SK-N-SH (cell line): ENCODE measurements at regions of chr5 and their contacts with region 1.

Region 1: DNA sequence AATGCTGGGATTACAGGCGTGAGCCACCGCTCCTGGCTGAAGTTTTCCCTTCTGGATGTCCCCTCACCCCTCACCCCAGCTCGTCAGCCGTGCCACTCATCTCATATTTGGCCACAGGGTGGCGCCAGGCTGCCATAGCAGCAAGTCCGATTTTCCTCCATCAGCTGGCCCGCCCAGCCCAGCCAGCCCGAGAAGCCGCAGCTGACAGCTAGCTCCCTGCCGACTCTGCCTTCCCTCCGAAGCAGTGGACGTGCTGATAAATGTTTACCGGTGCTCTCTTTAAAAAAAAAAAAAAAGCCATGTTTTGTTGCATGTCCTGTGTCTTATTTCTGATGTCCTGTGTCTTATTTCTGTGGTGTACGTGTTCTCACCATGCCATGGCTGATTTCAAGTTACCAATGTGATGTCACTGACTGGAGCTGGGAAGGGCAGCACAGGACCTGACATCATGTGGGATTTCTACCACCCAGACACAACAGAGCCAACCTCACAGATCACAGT is 58.3 kb downstream of the PFDN1 start:
- DNase-seq: peak; percentile 83
- H3K4me3 ChIP-seq: peak overlapping the region in 1 of 2 experiments; percentile 29; a peak in 1 of 4 replicates
- H3K27ac ChIP-seq: peak overlapping the region in 1 of 2 experiments; percentile 94; a peak in 2 of 4 replicates
- H3K4me1 ChIP-seq: peaks cover 44 to 53% of the 10 kb centered on the region in 2 experiments
- H3K27me3 ChIP-seq: no peaks in the 10 kb centered on the region
- CTCF ChIP-seq: peak; percentile 88
- EP300 ChIP-seq: no peak
- RAD21 ChIP-seq: peak; percentile 91

Region 2: DNA sequence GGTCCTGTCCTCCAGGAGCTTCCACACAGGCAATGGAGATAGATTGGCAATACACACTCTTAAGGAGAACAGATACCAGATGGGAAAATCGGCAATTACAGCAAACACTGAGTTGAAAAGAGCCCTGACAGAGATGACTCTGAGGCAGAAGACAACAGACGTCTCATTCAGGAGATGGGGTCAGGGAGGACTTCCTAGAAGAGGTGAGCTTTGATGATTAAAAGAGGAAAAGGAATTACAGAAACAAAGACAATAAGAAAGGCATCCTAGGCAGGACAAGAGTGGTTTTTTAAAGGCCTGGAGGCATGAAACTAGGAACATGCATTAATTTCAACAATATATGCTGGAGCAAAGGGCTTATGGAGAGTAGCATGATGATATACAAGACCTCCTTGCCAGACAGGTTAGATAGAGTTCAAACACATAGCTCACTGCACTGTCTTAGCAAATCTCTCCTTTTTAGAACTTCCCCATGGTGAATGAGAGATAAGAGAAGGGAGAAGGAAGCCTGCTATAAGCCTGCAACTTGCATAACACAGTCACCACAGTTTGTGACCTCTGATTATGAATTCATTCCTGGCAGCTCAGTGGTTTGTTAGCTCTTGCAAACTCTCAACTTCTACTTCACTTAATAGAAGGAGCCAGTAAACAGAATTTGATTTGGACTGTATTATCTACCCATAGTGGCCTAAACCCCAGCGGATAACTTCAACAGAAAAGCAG is 1094.9 kb before region 1 on chr5:
- CTCF ChIA-PET with region 1: no interaction called
- POLR2A ChIA-PET with region 1: no interaction called
- DNase-seq: no peak
- H3K4me3 ChIP-seq: no peak overlapping the region
- H3K27ac ChIP-seq: no peak overlapping the region
- H3K4me1 ChIP-seq: peaks cover 9 to 35% of the 10 kb centered on the region in 2 experiments; a peak in 3 of 4 replicates
- H3K27me3 ChIP-seq: no peaks in the 10 kb centered on the region
- CTCF ChIP-seq: no peak
- EP300 ChIP-seq: no peak
- RAD21 ChIP-seq: no peak

Region 3: GRCh38 chr5:140094889-140095288 is 149.7 kb before region 1 on chr5:
- CTCF ChIA-PET with region 1: no interaction called
- POLR2A ChIA-PET with region 1: no interaction called
- DNase-seq: no peak
- H3K4me3 ChIP-seq: no peak overlapping the region
- H3K27ac ChIP-seq: no peak overlapping the region
- H3K4me1 ChIP-seq: no peaks in the 10 kb centered on the region
- H3K27me3 ChIP-seq: no peaks in the 10 kb centered on the region; the same call in 1 of the 2 replicates
- CTCF ChIP-seq: no peak
- EP300 ChIP-seq: no peak
- RAD21 ChIP-seq: no peak

Region 4: DNA sequence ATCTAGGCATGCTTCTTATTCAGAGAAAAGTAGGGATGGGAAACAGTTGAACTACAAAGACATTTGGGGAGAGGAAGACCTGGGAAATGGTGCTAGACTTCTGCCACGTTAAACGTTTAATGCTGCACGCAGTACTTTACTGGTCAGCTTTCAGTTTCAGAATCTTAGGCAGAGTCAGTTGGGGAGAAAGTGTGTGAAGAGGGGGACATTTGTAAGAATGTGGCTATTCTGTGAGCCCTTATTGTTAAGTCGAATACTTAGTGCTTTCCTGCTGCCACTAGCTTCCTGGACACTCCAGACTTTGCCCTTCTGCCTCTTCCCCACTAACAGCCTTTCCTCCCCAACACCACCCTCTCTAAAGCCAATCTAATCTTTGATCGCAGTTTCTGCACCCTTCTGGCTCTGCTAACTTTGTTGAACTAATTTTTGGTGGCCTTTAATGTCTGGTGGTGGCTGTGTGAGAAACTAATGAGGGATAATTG is 63.5 kb before region 1 on chr5:
- CTCF ChIA-PET with region 1: interaction called, 11 read pairs
- POLR2A ChIA-PET with region 1: no interaction called
- DNase-seq: peak; percentile 39
- H3K4me3 ChIP-seq: no peak overlapping the region
- H3K27ac ChIP-seq: peak overlapping the region in 1 of 2 experiments; percentile 87; a peak in 2 of 4 replicates
- H3K4me1 ChIP-seq: peaks cover 11 to 36% of the 10 kb centered on the region in 2 experiments; a peak in 3 of 4 replicates
- H3K27me3 ChIP-seq: no peaks in the 10 kb centered on the region
- CTCF ChIP-seq: no peak
- EP300 ChIP-seq: peak in 1 of 2 experiments; percentile 92; a peak in 2 of 4 replicates
- RAD21 ChIP-seq: no peak

Region 5: GRCh38 chr5:140230373-140230772 is 14.2 kb before region 1 on chr5:
- CTCF ChIA-PET with region 1: interaction called, 14 read pairs
- POLR2A ChIA-PET with region 1: no interaction called
- DNase-seq: no peak
- H3K4me3 ChIP-seq: no peak overlapping the region
- H3K27ac ChIP-seq: no peak overlapping the region
- H3K4me1 ChIP-seq: peaks cover 0 to 3% of the 10 kb centered on the region in 2 experiments; a peak in 1 of 4 replicates
- H3K27me3 ChIP-seq: no peaks in the 10 kb centered on the region
- CTCF ChIP-seq: no peak
- EP300 ChIP-seq: no peak
- RAD21 ChIP-seq: no peak

Region 6: GRCh38 chr5:140284013-140284412 is 39.4 kb after region 1 on chr5:
- CTCF ChIA-PET with region 1: interaction called, 12 read pairs
- POLR2A ChIA-PET with region 1: no interaction called
- DNase-seq: no peak
- H3K4me3 ChIP-seq: no peak overlapping the region
- H3K27ac ChIP-seq: no peak overlapping the region
- H3K4me1 ChIP-seq: no peaks in the 10 kb centered on the region
- H3K27me3 ChIP-seq: no peaks in the 10 kb centered on the region
- CTCF ChIP-seq: no peak
- EP300 ChIP-seq: no peak
- RAD21 ChIP-seq: no peak

Region 7: DNA sequence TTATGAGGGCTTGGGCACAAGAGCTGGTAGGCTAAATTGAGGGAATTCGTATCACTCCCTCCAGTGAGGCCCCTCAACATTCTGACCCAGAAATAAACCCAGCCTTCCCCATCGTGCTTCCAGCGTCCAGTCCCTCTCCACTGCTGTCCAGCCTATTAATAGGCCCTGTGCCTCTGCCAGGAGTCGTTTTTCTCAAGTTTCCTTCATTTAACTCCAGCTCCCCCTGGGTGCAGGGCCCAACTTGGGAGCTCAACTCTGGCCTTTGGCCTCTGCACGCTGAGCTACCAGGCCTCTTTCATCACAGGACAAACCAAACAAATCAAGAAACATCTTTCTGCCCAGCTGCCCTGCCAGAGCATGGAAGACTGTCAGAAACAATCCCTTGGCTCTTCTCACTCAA is 91.8 kb after region 1 on chr5:
- CTCF ChIA-PET with region 1: interaction called, 12 read pairs
- POLR2A ChIA-PET with region 1: no interaction called
- DNase-seq: no peak
- H3K4me3 ChIP-seq: no peak overlapping the region
- H3K27ac ChIP-seq: no peak overlapping the region
- H3K4me1 ChIP-seq: 0 out of 4 replicates have a peak, but pooled peaks cover 0 to 2% of the 10 kb centered on the region in 2 experiments
- H3K27me3 ChIP-seq: no peaks in the 10 kb centered on the region
- CTCF ChIP-seq: no peak
- EP300 ChIP-seq: no peak
- RAD21 ChIP-seq: no peak

Region 8: GRCh38 chr5:140357726-140358093 is 113.1 kb after region 1 on chr5:
- CTCF ChIA-PET with region 1: interaction called, 418 read pairs
- POLR2A ChIA-PET with region 1: interaction called, 3 read pairs
- DNase-seq: peak; percentile 92
- H3K4me3 ChIP-seq: peak overlapping the region in 1 of 2 experiments; percentile 9; a peak in 2 of 4 replicates
- H3K27ac ChIP-seq: no peak overlapping the region
- H3K4me1 ChIP-seq: peaks cover 0 to 4% of the 10 kb centered on the region in 2 experiments; a peak in 1 of 4 replicates
- H3K27me3 ChIP-seq: no peaks in the 10 kb centered on the region
- CTCF ChIP-seq: peak; percentile 91
- EP300 ChIP-seq: no peak
- RAD21 ChIP-seq: peak; percentile 77